Transverse colon (tissue), 4 donors: ENCODE measurements at regions of chr20 and their contacts with region 1.

Region 1: GRCh38 chr20:53547664-53548239 is 45.9 kb downstream of the ZNF217 start:
- DNase-seq: peak; percentile 13
- H3K4me3 ChIP-seq: no peak overlapping the region
- H3K27ac ChIP-seq: no peak overlapping the region
- H3K4me1 ChIP-seq: peaks cover 0 to 10% (median 2%) of the 10 kb centered on the region in 4 donors
- H3K27me3 ChIP-seq: no peaks in the 10 kb centered on the region
- CTCF ChIP-seq: peak; percentile 64 to 78 (median 71)
- EP300 ChIP-seq: no peak
- POLR2A ChIP-seq: no peak

Region 2: DNA sequence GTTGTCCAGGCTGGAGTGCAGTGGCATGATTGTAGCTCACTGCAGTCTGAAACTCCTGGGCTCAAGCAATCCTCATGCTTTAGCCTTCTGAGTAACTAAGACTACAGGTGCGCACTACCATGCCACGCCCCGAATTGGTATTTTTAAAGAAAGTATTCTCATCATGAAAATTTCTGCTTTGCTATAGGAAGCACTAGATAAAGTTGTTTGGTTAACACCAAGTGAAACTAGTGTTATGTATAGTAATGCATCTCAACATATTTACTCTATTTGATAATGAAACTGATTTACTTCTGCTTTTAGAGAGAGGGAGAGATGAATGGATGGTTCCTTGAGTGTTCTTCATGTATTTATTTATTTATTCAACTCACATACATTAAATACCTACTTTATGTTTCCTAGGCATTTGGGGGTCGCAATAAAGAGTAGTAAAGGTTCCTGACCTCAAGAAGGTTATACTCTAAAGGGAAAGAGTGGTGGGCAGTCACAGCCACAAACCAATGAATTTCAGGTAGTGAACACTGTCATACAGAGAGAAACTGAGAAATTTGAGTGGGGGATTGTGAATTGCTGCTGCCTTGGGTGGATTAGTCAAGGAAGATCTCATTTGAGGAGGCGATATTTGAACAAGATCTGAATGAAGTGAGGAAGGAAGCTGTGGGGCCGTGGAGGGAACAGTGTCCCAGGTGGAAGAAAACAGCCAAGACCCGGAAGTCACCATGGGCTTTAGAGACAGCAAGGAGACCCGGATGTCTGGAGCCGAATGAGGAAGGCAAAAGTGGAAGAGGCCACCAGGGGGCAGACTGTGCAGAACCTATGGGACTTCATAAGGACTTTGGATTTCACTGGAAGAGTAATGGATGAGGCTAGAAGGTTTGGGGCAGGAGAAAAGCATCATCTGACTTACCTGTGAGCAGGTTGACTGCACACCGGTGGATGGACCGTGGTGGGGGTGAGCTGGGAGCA is 390.0 kb before region 1 on chr20:
- in situ Hi-C with region 1: loop called in 1 of 4 experiments (anchors 25 kb)
- intact Hi-C with region 1: no loop called
- DNase-seq: peak; percentile 59
- H3K4me3 ChIP-seq: no peak overlapping the region
- H3K27ac ChIP-seq: no peak overlapping the region
- H3K4me1 ChIP-seq: peaks cover 0 to 8% (median 0%) of the 10 kb centered on the region in 4 donors
- H3K27me3 ChIP-seq: no peaks in the 10 kb centered on the region
- CTCF ChIP-seq: peak; percentile 33 to 49 (median 44)
- EP300 ChIP-seq: no peak
- POLR2A ChIP-seq: no peak

Region 3: GRCh38 chr20:53210931-53211330 is 336.8 kb before region 1 on chr20:
- in situ Hi-C with region 1: no loop called
- intact Hi-C with region 1: loop called (anchors 5 kb)
- DNase-seq: no peak
- H3K4me3 ChIP-seq: no peak overlapping the region
- H3K27ac ChIP-seq: no peak overlapping the region
- H3K4me1 ChIP-seq: no peaks in the 10 kb centered on the region
- H3K27me3 ChIP-seq: peaks cover 1% of the 10 kb centered on the region
- CTCF ChIP-seq: no peak
- EP300 ChIP-seq: no peak
- POLR2A ChIP-seq: no peak

Region 4: GRCh38 chr20:53226826-53227225 is 320.9 kb before region 1 on chr20:
- in situ Hi-C with region 1: loop called in 1 of 4 experiments (anchors 25 kb)
- intact Hi-C with region 1: no loop called
- DNase-seq: no peak
- H3K4me3 ChIP-seq: no peak overlapping the region
- H3K27ac ChIP-seq: no peak overlapping the region
- H3K4me1 ChIP-seq: no peaks in the 10 kb centered on the region
- H3K27me3 ChIP-seq: no peaks in the 10 kb centered on the region
- CTCF ChIP-seq: no peak
- EP300 ChIP-seq: no peak
- POLR2A ChIP-seq: no peak

Region 5: DNA sequence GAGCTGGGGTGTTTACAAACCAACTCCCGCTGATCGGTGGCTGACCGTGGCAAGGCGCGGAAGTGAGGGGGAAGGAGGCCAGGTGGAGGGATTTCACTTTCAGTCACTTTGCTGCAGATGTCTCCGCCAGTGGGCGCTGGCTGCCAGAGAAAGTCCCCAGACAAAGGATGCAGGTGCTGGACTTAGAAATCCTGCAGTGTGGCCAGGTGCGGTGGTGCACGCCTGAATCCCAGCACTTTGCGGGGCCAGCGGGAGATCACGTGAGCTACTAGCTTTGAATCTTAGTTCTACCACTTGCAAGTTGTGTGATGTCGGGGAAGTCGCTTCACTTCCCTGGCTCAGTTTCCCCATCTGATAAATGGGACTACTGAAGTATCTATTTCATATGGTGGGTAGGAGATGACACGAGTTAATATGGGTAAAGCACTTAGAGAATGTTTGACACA is 134.5 kb before region 1 on chr20:
- in situ Hi-C with region 1: loop called in 1 of 4 experiments (anchors 25 kb)
- intact Hi-C with region 1: no loop called
- DNase-seq: peak; percentile 70
- H3K4me3 ChIP-seq: no peak overlapping the region
- H3K27ac ChIP-seq: no peak overlapping the region
- H3K4me1 ChIP-seq: no peaks in the 10 kb centered on the region
- H3K27me3 ChIP-seq: no peaks in the 10 kb centered on the region
- CTCF ChIP-seq: peak in 4 of 5 experiments; percentile 37 to 60 (median 50)
- EP300 ChIP-seq: no peak
- POLR2A ChIP-seq: no peak